Upper lobe of right lung (tissue), 1 donor: ENCODE measurements at regions of chr20 and their contacts with region 1.

Region 1: GRCh38 chr20:54521550-54522287 is 46.3 kb downstream of the DOK5 start:
- DNase-seq: no peak
- ATAC-seq: no peak
- H3K4me3 ChIP-seq: no peak overlapping the region
- H3K27ac ChIP-seq: no peak overlapping the region
- H3K4me1 ChIP-seq: no peaks in the 10 kb centered on the region
- H3K27me3 ChIP-seq: no peaks in the 10 kb centered on the region
- CTCF ChIP-seq: no peak

Region 2: GRCh38 chr20:53805895-53806384 is 715.8 kb before region 1 on chr20:
- intact Hi-C with region 1: no loop called
- DNase-seq: no peak
- ATAC-seq: no peak
- H3K4me3 ChIP-seq: no peak overlapping the region
- H3K27ac ChIP-seq: no peak overlapping the region
- H3K4me1 ChIP-seq: no peaks in the 10 kb centered on the region
- H3K27me3 ChIP-seq: no peaks in the 10 kb centered on the region
- CTCF ChIP-seq: no peak

Region 3: DNA sequence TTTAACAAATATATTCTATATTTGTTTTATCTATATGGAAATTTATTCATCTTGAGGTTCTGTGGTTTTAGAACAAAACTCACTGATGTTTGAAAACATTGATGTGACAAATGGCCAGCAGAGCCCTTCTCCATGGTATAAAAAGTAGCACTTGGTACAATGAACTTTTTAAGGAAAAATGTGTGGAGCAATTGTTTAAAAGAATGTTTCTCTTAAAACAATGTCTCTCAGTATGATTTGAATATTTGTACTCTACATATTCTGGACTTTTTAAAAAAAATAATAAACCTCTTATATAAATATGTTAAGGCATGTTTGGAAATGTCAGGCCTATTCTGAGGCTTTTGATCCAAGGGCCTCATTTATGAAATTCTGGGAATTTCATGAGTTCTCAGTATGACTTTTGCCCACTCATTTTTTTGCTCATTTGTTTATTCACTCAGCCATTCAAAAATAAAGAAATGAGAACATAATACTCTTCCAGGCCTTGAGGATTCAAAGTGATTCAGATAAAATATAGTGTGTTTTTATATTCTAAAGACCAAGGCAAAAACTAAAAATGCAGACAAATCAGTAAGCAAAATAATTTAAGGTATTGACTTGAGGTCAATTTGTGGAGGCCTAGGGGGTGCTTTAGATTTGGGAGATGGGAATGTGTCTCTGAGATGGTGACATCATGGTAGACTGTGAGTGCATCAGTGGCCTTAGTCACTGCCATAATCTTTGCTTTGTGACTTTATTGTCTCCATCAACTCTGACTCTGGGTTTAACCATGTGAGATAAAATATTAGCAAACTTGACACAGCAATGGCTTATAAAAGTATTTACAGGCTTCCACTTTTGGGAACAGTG is 14.1 kb after region 1 on chr20:
- intact Hi-C with region 1: loop called (anchors 2 kb)
- DNase-seq: no peak
- ATAC-seq: no peak
- H3K4me3 ChIP-seq: no peak overlapping the region
- H3K27ac ChIP-seq: no peak overlapping the region
- H3K4me1 ChIP-seq: no peaks in the 10 kb centered on the region
- H3K27me3 ChIP-seq: no peaks in the 10 kb centered on the region
- CTCF ChIP-seq: no peak